Activated T-helper 2 cell treated with anti-CD3 and anti-CD28 coated beads, Interferon-gamma antibody, Interleukin-2, Interleukin-4, amounts not matched to agents 10 μg/mL and 5 μg/mL and 100 μg/mL, durations not matched to agents 14 hours and 24 hours and 36 hours (primary cell): ENCODE measurements at regions of chr2 and their contacts with region 1.

Region 1: GRCh38 chr2:190911813-190912212 is 31.2 kb downstream of the GLS start:
- DNase-seq: no peak
- H3K4me3 Mint-ChIP-seq: no peak overlapping the region
- H3K27ac Mint-ChIP-seq: peak overlapping the region; percentile 53
- H3K4me1 Mint-ChIP-seq: peaks cover 42% of the 10 kb centered on the region
- H3K27me3 Mint-ChIP-seq: no peaks in the 10 kb centered on the region

Region 2: GRCh38 chr2:190819840-190820301 is 91.9 kb before region 1 on chr2:
- intact Hi-C with region 1: no loop called
- DNase-seq: no peak
- H3K4me3 Mint-ChIP-seq: no peak overlapping the region
- H3K27ac Mint-ChIP-seq: no peak overlapping the region
- H3K4me1 Mint-ChIP-seq: no peaks in the 10 kb centered on the region
- H3K27me3 Mint-ChIP-seq: no peaks in the 10 kb centered on the region

Region 3: DNA sequence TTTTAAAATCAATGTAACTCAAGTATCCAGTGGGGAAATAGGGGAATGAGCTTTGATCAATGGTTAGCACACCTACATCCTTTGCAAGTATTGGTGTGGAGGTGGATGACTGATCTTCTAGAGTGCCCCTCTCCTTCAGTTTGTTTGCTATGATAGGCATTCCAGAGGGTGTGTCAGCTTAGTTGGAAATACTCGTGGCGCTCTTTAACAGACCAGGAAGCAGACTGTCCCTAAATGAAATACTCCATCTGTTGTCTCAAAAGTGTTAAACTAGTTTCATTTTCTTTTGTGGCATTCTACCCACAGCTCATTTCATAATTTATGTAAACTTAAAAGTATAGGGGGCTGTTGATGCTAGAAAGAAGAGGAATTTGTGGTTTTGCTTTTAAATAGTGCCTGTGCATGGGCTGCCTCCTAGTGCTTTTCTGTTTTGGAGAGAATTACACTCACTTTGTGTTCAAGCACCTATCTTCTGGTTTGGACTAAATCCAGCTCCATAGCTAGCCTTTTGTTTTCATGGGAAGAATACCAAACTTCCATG is 36.0 kb after region 1 on chr2:
- intact Hi-C with region 1: loop called (anchors 5 kb)
- DNase-seq: no peak
- H3K4me3 Mint-ChIP-seq: no peak overlapping the region
- H3K27ac Mint-ChIP-seq: peak overlapping the region; percentile 23
- H3K4me1 Mint-ChIP-seq: peaks cover 16% of the 10 kb centered on the region
- H3K27me3 Mint-ChIP-seq: no peaks in the 10 kb centered on the region

Region 4: DNA sequence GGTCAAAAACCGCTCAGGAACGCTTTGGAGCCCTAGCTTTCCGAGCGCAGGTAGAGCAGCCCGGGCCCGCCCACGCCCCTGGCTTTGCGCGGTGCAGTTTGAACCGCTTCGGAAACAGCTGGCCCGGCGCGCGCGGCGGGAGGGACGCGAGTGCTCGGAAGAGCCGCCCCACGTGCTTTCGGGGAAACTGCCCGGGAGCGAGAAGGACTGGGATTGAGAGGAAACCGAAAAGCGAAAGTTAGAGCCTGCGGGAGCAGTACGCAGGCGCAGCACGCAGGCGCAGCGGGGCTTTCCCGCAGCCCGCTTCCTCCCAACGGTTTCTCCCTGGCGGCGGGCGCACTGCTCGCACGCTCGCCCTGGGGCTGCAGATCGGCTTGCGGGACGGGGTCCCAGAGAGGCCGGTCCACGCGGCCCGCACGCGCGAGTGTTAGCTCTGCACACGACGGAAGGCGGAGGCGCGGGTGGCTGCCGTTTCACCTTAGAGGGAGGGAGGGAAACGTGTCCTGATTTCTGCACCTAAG is 108.5 kb after region 1 on chr2:
- intact Hi-C with region 1: loop called (anchors 5 kb)
- DNase-seq: peak; percentile 96
- H3K4me3 Mint-ChIP-seq: no peak overlapping the region
- H3K27ac Mint-ChIP-seq: no peak overlapping the region
- H3K4me1 Mint-ChIP-seq: peaks cover 35% of the 10 kb centered on the region
- H3K27me3 Mint-ChIP-seq: no peaks in the 10 kb centered on the region